ENCODE measurements at regions of chr15 and their contacts with region 1.

Region 1: GRCh38 chr15:101008158-101009139 is 89.3 kb downstream of the LRRK1 start:
- DNase-seq: peak; percentile 83
- H3K27ac ChIP-seq: peak overlapping the region; percentile 60
- CTCF ChIP-seq: peak; percentile 100

Region 2: GRCh38 chr15:100873029-100873677 is 135.3 kb before region 1 on chr15:
- CTCF ChIA-PET with region 1: interaction called, 15 read pairs
- POLR2A ChIA-PET with region 1: no interaction called
- DNase-seq: peak; percentile 78
- H3K27ac ChIP-seq: no peak overlapping the region
- CTCF ChIP-seq: peak; percentile 98

Region 3: DNA sequence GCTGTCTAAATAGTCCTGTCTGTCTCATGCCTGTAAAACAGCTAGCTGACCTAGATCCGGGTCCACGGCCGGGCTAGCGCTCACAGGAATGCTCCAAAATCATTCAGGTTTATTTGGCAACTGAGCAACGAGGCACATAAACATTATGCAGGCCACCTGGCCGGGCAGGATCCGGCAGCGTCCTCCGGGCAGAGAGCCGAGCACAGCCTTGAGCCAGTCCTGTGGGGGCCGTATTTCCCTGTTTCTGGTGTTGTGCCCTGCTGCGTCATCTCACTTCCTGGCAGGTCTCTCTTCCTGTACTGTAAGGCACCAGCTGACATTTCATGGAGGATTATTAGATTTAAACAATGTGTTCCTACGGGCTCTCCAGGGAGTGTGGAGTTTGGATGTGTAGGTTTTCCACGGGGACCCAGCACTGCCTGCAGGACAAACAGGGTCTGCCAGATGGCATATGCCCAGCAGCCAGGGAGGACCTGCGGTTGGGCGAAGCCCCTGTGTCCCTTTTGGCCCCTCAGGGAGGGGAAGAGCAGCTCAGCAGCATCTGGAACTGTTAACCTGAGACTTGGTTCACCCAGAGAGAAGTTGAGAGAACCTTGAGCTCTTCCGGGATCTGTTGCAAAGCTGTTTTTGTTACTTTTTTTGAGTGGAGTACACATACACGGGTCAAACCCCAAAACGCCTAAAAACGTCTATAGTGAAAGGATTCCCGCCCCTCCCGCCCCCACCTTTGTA is 105.8 kb before region 1 on chr15:
- CTCF ChIA-PET with region 1: interaction called, 11 read pairs
- POLR2A ChIA-PET with region 1: no interaction called
- DNase-seq: peak; percentile 86
- H3K27ac ChIP-seq: peak overlapping the region; percentile 96
- CTCF ChIP-seq: no peak

Region 4: DNA sequence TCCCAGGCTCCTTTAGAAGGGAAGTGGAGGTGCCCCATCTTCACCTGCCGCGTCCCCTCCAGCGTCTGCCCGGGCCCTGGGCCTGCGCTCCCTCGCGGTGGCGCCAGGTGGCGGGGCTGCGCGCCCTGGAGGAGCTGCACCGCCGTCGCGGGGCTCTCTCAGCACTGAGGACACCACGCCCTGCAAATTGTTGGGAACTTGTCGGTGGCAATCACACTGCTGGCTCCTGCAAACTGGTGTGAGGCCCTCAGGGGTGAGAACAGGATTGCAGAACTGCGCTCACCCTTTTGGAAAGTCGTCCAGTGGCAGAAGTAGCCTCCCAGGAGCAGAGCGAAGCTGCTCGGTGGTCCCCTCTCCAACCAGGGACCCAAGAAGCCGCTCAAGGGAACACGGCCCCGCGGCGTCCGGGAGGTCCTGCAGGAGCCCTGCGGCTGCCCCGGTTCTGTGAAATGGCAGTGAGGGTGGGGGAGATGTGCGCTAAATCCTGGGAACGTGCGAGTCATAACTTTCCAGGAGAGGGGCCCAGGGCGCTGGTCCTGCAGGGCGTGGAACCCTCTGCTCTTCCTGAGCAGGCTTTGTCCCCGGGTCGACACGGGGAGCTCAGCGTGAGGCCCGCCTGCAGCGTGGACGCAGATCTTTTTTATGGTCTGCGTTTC is 90.3 kb before region 1 on chr15:
- CTCF ChIA-PET with region 1: interaction called, 161 read pairs
- POLR2A ChIA-PET with region 1: interaction called, 11 read pairs
- DNase-seq: peak; percentile 91
- H3K27ac ChIP-seq: peak overlapping the region; percentile 85
- CTCF ChIP-seq: peak; percentile 99

Region 5: DNA sequence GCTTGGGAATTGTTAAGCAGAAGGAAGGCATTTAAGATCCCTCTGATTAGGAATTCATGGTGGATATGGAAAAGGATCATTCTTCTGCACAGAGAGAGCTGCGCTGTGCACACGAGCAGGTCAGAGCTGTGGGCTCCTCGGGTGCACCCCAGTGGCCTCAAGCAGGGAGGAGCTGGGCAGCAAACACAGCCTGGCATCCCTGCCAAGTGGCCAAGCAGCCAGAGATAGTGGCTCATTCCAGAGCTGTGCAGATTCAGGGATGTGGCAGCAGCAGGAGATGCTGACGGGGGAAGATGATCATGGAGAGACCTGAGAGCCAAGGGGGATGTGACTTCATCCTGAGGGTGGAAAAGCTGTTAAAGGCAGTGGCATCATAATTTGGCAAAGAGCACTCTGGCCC is 33.4 kb before region 1 on chr15:
- CTCF ChIA-PET with region 1: interaction called, 12 read pairs
- POLR2A ChIA-PET with region 1: no interaction called
- DNase-seq: no peak
- H3K27ac ChIP-seq: no peak overlapping the region
- CTCF ChIP-seq: no peak

Region 6: DNA sequence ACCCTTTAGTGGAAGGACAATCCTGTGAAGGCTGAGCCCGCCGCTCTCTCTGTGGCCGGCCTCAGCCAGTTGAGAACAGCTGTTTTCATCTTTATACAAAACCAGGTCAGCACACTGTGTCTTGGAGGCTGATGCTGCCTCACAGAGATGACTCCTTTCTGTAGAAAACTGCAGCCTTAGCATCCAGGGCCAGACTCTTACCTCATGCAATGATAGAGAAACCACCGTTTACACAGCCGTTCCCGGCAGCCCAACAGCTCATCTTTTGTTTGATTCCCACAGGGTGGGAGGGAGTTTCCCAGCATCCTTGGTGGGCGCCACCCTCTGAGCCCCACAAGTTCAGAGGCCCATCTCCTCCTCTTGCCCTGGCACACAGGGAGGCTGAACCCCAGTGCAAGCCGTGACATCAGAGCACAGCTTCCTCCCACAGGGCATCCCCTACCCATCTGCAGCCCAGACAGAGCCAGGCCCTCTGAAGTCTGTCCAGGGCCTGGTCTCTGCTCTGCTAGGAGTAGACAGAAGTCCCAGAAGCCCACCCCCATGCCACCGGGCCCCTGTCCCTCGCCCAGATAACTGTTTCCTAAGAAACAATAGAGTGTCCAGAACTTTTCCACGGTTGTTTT is 15.7 kb after region 1 on chr15:
- CTCF ChIA-PET with region 1: interaction called, 13 read pairs
- POLR2A ChIA-PET with region 1: no interaction called
- DNase-seq: no peak
- H3K27ac ChIP-seq: no peak overlapping the region
- CTCF ChIP-seq: no peak

Region 7: GRCh38 chr15:101258238-101259144 is 250.0 kb after region 1 on chr15:
- CTCF ChIA-PET with region 1: interaction called, 14 read pairs
- POLR2A ChIA-PET with region 1: no interaction called
- DNase-seq: peak; percentile 61
- H3K27ac ChIP-seq: no peak overlapping the region
- CTCF ChIP-seq: peak; percentile 89